A549 (cell line): ENCODE measurements at regions of chr15 and their contacts with region 1.

Region 1: GRCh38 chr15:66841953-66842681 is 140.1 kb downstream of the SMAD6 start:
- DNase-seq: peak; percentile 68 to 81
- ATAC-seq: peak; percentile 74 to 75
- H3K4me3 ChIP-seq: peak overlapping the region; percentile 62
- H3K27ac ChIP-seq: peak overlapping the region; percentile 91 to 92
- H3K4me1 ChIP-seq: peaks cover 34% of the 10 kb centered on the region
- CTCF ChIP-seq: no peak
- EP300 ChIP-seq: peak in 1 of 2 experiments; percentile 50; a peak in 1 of 5 replicates
- POLR2A ChIP-seq: peak; percentile 20; the same call in 1 of the 2 replicates
- RAD21 ChIP-seq: peak in 1 of 2 experiments; percentile 32; a peak in 1 of 5 replicates

Region 2: DNA sequence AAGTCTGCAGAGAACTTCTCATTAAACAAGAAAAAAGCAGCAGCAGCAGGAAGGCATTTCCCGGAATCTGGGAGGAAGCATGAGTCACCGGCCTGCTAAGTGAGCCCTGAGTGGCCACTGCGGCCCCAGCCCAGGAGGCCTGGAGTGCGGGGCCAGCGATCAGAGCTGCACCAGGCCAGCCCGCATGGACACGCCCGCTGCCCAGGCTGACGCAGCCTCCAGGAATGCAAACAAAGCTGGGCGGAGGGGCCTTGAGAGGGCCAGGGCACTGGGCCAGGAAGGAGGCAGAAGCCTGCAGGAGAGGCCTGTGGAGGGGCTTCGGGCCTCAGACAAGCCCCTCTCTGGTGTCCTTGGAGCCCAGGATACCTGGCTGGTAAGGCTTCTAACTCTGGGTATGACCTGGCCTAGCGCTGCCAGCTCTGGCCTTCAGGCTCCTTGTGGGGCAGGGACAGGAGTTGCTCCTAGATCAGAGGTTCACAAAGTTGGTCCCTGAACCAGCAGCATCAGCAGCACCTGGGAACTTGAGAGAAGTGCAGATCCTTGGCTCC is 38.9 kb before region 1 on chr15:
- CTCF ChIA-PET with region 1: interaction called, 465 read pairs
- POLR2A ChIA-PET with region 1: interaction called, 7 read pairs
- DNase-seq: peak; percentile 95 to 98
- ATAC-seq: peak; percentile 97 to 99
- H3K4me3 ChIP-seq: no peak overlapping the region
- H3K27ac ChIP-seq: peak overlapping the region; percentile 83 to 93
- H3K4me1 ChIP-seq: peaks cover 58% of the 10 kb centered on the region
- CTCF ChIP-seq: no peak
- EP300 ChIP-seq: peak; percentile 13 to 65; a peak in 2 of 5 replicates
- POLR2A ChIP-seq: peak; percentile 21; the same call in 1 of the 2 replicates
- RAD21 ChIP-seq: peak in 1 of 2 experiments; percentile 33; a peak in 2 of 5 replicates

Region 3: DNA sequence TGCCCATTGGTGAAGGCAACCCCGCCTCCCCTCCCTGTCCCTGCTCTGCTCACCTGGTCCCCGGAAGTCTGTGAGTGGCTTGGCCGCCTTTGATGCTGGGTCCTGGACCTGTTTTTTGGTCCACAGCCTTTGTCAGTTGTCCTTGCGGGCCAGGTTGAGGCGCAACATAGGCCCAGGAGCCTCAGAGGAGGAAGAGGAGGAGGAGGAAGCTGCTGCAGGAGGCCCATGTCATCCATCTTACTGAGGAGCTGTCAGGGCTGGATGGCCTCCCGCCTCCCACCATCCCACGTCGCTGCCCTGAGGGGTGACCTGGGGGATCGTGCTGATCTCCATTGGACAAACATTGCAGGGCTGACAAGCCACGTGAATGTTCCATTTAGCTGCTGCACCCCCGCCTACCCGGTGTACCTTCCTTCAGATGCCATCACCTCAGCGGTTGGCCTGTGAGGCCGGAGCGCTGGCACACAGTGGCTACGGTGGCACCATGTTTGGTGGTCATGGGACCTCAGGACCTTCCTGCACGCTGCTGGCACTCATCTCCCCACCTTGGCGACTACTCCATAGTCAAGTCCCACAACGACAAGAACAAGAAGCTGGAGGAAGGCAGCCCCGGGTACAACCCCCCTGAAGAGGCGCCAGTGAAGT is 33.8 kb before region 1 on chr15:
- CTCF ChIA-PET with region 1: interaction called, 18 read pairs
- POLR2A ChIA-PET with region 1: interaction called, 7 read pairs
- DNase-seq: no peak
- ATAC-seq: no peak
- H3K4me3 ChIP-seq: no peak overlapping the region
- H3K27ac ChIP-seq: no peak overlapping the region
- H3K4me1 ChIP-seq: peaks cover 12% of the 10 kb centered on the region
- CTCF ChIP-seq: no peak
- EP300 ChIP-seq: no peak
- POLR2A ChIP-seq: no peak
- RAD21 ChIP-seq: no peak

Region 4: DNA sequence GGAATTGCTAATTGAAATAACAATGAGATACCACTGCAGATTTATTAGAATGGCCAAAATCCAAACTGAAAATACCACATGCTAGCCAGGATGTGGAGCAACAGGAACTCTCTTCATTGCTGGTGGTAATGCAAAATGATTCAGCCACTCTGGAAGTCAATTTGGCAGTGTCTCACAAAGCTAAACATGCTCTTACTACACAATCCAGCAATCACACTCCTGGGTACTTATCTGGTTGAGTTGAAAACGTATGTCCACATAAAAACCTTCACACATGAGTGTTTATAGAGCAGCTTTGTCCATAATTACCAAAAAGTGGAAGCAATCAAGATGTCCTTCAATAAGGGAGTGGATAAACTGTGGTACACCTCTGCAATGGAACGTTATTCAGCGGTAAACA is 26.8 kb before region 1 on chr15:
- CTCF ChIA-PET with region 1: interaction called, 12 read pairs
- POLR2A ChIA-PET with region 1: no interaction called
- DNase-seq: no peak
- ATAC-seq: no peak
- H3K4me3 ChIP-seq: no peak overlapping the region
- H3K27ac ChIP-seq: no peak overlapping the region
- H3K4me1 ChIP-seq: peaks cover 16% of the 10 kb centered on the region
- CTCF ChIP-seq: no peak
- EP300 ChIP-seq: no peak
- POLR2A ChIP-seq: no peak
- RAD21 ChIP-seq: no peak

Region 5: DNA sequence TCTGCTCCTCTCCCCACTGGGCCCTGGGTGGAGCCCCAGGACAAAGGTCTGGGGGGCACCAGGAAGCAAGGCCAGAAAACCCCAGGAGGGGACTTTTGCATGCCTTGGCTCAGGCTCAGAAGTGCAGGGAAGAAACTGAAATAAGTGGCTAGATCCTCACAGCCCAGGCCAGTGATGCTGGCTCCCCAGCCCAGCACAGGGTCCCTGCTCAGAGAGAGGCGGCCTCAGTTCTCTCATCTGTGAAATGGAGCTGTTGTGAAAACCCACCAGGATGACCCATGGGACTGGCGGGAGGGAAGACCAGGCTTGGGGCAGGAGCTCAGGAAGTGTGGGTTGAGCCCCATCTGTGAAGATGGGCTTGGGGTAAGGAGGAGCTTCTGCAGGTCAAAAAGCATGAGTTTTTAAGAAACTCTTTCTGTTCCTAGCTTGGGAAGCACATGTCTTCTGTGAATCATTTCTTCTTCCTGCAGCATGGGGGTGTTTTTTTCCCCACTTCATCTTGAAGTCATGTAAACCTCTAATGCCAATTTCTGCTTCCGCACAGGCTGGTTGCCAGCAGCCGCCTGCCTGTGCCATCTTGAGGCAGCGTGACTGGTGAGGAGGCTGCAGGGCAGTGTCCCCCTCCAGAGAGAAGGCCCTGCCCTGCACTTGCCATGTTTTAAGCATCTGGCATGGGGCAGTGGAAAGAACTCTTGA is 21.5 kb before region 1 on chr15:
- CTCF ChIA-PET with region 1: interaction called, 10 read pairs
- POLR2A ChIA-PET with region 1: no interaction called
- DNase-seq: no peak
- ATAC-seq: no peak
- H3K4me3 ChIP-seq: no peak overlapping the region
- H3K27ac ChIP-seq: peak overlapping the region in 1 of 2 experiments; percentile 35; a peak in 1 of 6 replicates
- H3K4me1 ChIP-seq: peaks cover 16% of the 10 kb centered on the region
- CTCF ChIP-seq: no peak
- EP300 ChIP-seq: no peak
- POLR2A ChIP-seq: no peak
- RAD21 ChIP-seq: no peak